Naive thymus-derived CD4-positive, alpha-beta T cell (primary cell): ENCODE measurements at regions of chr2 and their contacts with region 1.

Region 1: GRCh38 chr2:20962939-20963557 is 80.8 kb downstream of the APOB start:
- DNase-seq: peak; percentile 10 to 63 (median 45)
- ATAC-seq: peak; percentile 79
- H3K4me3 ChIP-seq: no peak overlapping the region
- H3K4me3 Mint-ChIP-seq: no peak overlapping the region
- H3K27ac ChIP-seq: no peak overlapping the region
- H3K27ac Mint-ChIP-seq: no peak overlapping the region
- H3K4me1 ChIP-seq: no peaks in the 10 kb centered on the region
- H3K4me1 Mint-ChIP-seq: no peaks in the 10 kb centered on the region
- H3K27me3 ChIP-seq: no peaks in the 10 kb centered on the region
- H3K27me3 Mint-ChIP-seq: peaks cover 3 to 35% (median 13%) of the 10 kb centered on the region in 5 donors

Region 2: DNA sequence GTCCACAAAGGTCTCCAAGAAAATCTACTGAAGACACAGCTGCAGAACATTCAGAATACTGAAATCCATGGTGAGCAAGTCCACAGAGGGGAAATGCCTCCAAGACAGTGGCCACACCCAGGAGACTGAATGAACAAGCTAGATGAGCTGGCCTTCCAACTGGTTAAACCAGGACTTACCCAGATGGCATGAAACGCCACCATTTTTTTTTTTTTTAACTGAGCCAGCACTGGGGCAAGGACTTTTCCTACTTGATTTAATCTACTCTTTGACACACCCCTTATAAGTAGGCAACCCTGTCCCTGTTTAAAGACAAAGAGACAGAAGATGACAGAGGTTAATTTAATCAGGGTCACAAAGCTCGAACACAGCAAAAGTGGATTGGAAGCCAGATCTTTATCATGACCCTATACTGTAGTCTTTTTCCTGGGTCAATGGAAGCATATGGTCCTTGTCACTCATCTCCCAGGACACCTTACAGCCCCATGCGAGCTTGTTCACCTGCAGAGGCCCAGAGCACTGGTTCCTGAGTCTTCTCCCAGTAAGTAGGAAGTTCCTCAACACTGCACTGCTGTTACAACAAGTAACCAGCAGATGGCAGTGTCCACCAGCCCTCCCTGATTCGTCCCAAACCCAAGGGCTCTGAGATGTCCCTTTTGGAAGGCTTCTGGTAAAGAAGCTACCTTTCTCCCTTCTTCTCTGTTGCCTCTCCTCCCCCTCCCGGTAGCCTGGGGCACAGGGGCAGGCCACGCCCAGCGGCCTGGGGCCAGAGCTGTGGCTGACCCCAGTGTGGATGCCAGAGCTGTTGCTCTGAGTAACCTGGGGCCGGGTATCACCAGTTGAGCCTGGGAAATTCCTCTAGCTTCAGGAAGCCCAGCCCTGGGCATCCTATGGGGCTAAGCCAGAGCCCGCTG is 301.7 kb before region 1 on chr2:
- CTCF ChIA-PET with region 1: interaction called, 48 read pairs
- POLR2A ChIA-PET with region 1: no interaction called
- intact Hi-C with region 1: loop called in 1 of 2 experiments (anchors 1 kb)
- DNase-seq: peak in 8 of 9 donors; percentile 35 to 71 (median 62)
- ATAC-seq: peak; percentile 88
- H3K4me3 ChIP-seq: no peak overlapping the region
- H3K4me3 Mint-ChIP-seq: no peak overlapping the region
- H3K27ac ChIP-seq: no peak overlapping the region
- H3K27ac Mint-ChIP-seq: no peak overlapping the region
- H3K4me1 ChIP-seq: no peaks in the 10 kb centered on the region
- H3K4me1 Mint-ChIP-seq: peaks cover 2 to 15% (median 7%) of the 10 kb centered on the region in 7 donors
- H3K27me3 ChIP-seq: peaks cover 5 to 7% of the 10 kb centered on the region in 2 donors
- H3K27me3 Mint-ChIP-seq: peaks cover 52 to 80% (median 59%) of the 10 kb centered on the region in 5 donors

Region 3: GRCh38 chr2:20682167-20682920 is 280.7 kb before region 1 on chr2:
- CTCF ChIA-PET with region 1: interaction called, 3 read pairs
- POLR2A ChIA-PET with region 1: no interaction called
- intact Hi-C with region 1: loop called in 1 of 2 experiments (anchors 5 kb)
- DNase-seq: no peak
- ATAC-seq: no peak
- H3K4me3 ChIP-seq: no peak overlapping the region
- H3K4me3 Mint-ChIP-seq: no peak overlapping the region
- H3K27ac ChIP-seq: no peak overlapping the region
- H3K27ac Mint-ChIP-seq: peak overlapping the region in 3 of 9 donors; percentile 31 to 49 (median 34)
- H3K4me1 ChIP-seq: no peaks in the 10 kb centered on the region
- H3K4me1 Mint-ChIP-seq: peaks cover 0 to 8% (median 2%) of the 10 kb centered on the region in 7 donors
- H3K27me3 ChIP-seq: no peaks in the 10 kb centered on the region
- H3K27me3 Mint-ChIP-seq: no peaks in the 10 kb centered on the region

Region 4: DNA sequence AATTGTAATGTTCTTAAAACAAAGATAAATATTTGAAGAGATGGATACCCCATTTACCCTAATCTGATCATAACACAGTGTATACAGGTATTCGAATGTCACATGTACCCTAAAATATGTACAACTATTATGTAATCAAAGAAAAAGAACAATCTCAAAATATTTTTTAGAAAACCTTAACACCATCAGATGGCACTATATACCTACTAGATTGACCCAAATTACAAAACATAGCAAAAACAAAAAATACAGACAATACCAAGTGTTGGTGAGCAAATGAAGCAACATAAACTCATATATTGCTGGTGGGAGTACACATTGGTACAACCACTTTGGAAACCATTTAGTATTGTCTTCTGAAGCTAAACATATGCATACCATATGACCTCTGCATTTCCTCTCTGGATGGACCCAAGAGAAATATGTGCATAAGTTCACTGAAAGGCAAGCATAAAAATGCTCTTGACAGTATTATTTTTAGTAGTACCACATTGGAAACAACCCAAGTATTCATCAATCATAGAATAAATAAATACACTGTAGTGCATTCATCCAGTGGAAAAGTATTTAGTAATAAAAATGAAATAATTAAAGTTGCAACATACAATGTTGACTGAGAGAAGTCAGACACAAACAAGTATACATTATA is 240.3 kb before region 1 on chr2:
- CTCF ChIA-PET with region 1: no interaction called
- POLR2A ChIA-PET with region 1: no interaction called
- intact Hi-C with region 1: loop called in 1 of 2 experiments (anchors 1 kb)
- DNase-seq: no peak
- ATAC-seq: no peak
- H3K4me3 ChIP-seq: no peak overlapping the region
- H3K4me3 Mint-ChIP-seq: no peak overlapping the region
- H3K27ac ChIP-seq: no peak overlapping the region
- H3K27ac Mint-ChIP-seq: no peak overlapping the region
- H3K4me1 ChIP-seq: no peaks in the 10 kb centered on the region
- H3K4me1 Mint-ChIP-seq: peaks cover 0 to 9% (median 0%) of the 10 kb centered on the region in 7 donors
- H3K27me3 ChIP-seq: no peaks in the 10 kb centered on the region
- H3K27me3 Mint-ChIP-seq: no peaks in the 10 kb centered on the region

Region 5: GRCh38 chr2:20781656-20782265 is 181.3 kb before region 1 on chr2:
- CTCF ChIA-PET with region 1: no interaction called
- POLR2A ChIA-PET with region 1: no interaction called
- intact Hi-C with region 1: loop called (anchors 1 kb)
- DNase-seq: no peak
- ATAC-seq: peak; percentile 49
- H3K4me3 ChIP-seq: no peak overlapping the region
- H3K4me3 Mint-ChIP-seq: no peak overlapping the region
- H3K27ac ChIP-seq: no peak overlapping the region
- H3K27ac Mint-ChIP-seq: no peak overlapping the region
- H3K4me1 ChIP-seq: no peaks in the 10 kb centered on the region
- H3K4me1 Mint-ChIP-seq: peaks cover 0 to 7% (median 2%) of the 10 kb centered on the region in 7 donors
- H3K27me3 ChIP-seq: no peaks in the 10 kb centered on the region
- H3K27me3 Mint-ChIP-seq: no peaks in the 10 kb centered on the region

Region 6: GRCh38 chr2:20992201-20992711 is 29.2 kb after region 1 on chr2:
- CTCF ChIA-PET with region 1: no interaction called
- POLR2A ChIA-PET with region 1: no interaction called
- intact Hi-C with region 1: no loop called
- DNase-seq: no peak
- ATAC-seq: no peak
- H3K4me3 ChIP-seq: no peak overlapping the region
- H3K4me3 Mint-ChIP-seq: no peak overlapping the region
- H3K27ac ChIP-seq: no peak overlapping the region
- H3K27ac Mint-ChIP-seq: no peak overlapping the region
- H3K4me1 ChIP-seq: no peaks in the 10 kb centered on the region
- H3K4me1 Mint-ChIP-seq: no peaks in the 10 kb centered on the region
- H3K27me3 ChIP-seq: no peaks in the 10 kb centered on the region
- H3K27me3 Mint-ChIP-seq: peaks cover 0 to 11% (median 3%) of the 10 kb centered on the region in 5 donors